ENCODE measurements at regions of chr5 and their contacts with region 1.

Region 1: DNA sequence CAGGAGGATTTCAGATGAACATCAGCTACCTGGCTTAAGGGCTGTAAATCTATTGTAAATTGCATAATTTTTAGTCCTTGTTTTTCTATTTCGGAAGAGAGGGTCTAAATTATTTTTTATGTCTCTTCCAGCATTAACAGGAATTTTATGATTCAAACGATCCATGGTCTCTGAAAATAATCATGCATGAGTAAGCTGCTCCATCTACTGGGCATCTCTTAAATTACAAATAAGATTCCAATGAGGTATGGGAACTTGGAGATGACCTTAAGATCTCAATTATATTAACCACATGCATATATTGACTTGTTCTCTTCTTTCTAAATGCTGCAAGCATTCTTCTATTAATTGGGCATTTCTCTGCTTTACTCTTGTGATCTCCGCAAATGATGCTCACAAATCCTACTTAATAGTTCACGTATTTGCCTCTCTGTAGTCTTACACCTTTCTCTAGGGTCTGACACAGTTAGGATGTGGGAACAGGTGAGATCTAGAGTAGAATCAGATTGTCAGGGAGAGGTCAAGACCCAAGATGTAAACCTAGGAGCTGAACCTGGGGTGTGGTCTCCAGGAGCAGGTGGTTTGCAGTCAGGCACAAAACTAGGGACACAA is 86.9 kb downstream of the NUDT12 start:
- DNase-seq: peak; percentile 9
- H3K4me3 Mint-ChIP-seq: no peak overlapping the region
- H3K27ac Mint-ChIP-seq: no peak overlapping the region
- H3K4me1 Mint-ChIP-seq: no peaks in the 10 kb centered on the region
- H3K27me3 Mint-ChIP-seq: no peaks in the 10 kb centered on the region
- CTCF ChIP-seq: peak; percentile 68

Region 2: GRCh38 chr5:103066326-103066725 is 409.4 kb before region 1 on chr5:
- CTCF ChIA-PET with region 1: no interaction called
- intact Hi-C with region 1: loop called (anchors 10 kb)
- DNase-seq: no peak
- H3K4me3 Mint-ChIP-seq: no peak overlapping the region
- H3K27ac Mint-ChIP-seq: no peak overlapping the region
- H3K4me1 Mint-ChIP-seq: peaks cover 6% of the 10 kb centered on the region
- H3K27me3 Mint-ChIP-seq: no peaks in the 10 kb centered on the region
- CTCF ChIP-seq: no peak

Region 3: DNA sequence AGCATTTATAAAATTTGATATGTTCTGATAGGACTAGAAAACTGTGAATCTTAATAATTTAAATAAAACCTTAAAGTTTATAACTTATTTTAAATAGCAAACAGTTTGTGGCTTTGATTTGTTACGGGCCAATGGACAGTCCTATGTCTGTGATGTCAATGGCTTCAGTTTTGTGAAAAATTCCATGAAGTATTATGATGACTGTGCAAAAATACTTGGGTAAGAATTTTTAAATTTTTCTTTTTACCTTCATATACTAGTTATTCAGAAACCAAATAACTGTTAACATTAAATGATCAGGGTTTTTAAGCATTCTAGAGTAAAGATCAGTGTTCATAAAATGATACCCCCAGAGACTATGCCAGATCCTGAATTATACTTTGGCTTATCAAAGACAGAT is 324.6 kb before region 1 on chr5:
- CTCF ChIA-PET with region 1: no interaction called
- intact Hi-C with region 1: loop called (anchors 10 kb)
- DNase-seq: no peak
- H3K4me3 Mint-ChIP-seq: no peak overlapping the region
- H3K27ac Mint-ChIP-seq: no peak overlapping the region
- H3K4me1 Mint-ChIP-seq: no peaks in the 10 kb centered on the region
- H3K27me3 Mint-ChIP-seq: no peaks in the 10 kb centered on the region
- CTCF ChIP-seq: no peak

Region 4: GRCh38 chr5:103232393-103232999 is 243.2 kb before region 1 on chr5:
- CTCF ChIA-PET with region 1: interaction called, 9 read pairs
- intact Hi-C with region 1: loop called (anchors 1 kb)
- DNase-seq: peak; percentile 30
- H3K4me3 Mint-ChIP-seq: no peak overlapping the region
- H3K27ac Mint-ChIP-seq: no peak overlapping the region
- H3K4me1 Mint-ChIP-seq: no peaks in the 10 kb centered on the region
- H3K27me3 Mint-ChIP-seq: no peaks in the 10 kb centered on the region
- CTCF ChIP-seq: peak; percentile 71

Region 5: DNA sequence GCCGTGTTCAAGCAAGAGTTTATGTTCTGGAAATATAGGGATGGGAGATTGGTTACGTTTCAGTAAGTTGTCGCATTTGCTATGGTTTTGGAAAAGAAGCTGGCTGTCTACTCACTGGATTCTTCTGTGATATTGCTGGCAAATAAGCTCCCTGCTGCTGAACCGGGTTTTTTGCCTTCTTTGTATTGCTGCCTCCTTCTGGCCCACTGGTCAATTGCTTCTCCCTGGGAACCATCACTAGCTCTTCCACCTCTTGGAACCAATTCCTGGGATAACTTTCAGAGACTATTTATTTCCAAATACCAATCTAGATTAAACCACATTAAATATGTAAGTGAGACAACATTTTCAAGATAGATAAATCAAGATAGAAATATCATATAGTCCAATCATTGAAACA is 43.8 kb after region 1 on chr5:
- CTCF ChIA-PET with region 1: no interaction called
- intact Hi-C with region 1: no loop called
- DNase-seq: peak; percentile 20
- H3K4me3 Mint-ChIP-seq: no peak overlapping the region
- H3K27ac Mint-ChIP-seq: no peak overlapping the region
- H3K4me1 Mint-ChIP-seq: peaks cover 25% of the 10 kb centered on the region
- H3K27me3 Mint-ChIP-seq: no peaks in the 10 kb centered on the region
- CTCF ChIP-seq: no peak